HepG2 (cell line): ENCODE measurements at regions of chr1 and their contacts with region 1.

Region 1: DNA sequence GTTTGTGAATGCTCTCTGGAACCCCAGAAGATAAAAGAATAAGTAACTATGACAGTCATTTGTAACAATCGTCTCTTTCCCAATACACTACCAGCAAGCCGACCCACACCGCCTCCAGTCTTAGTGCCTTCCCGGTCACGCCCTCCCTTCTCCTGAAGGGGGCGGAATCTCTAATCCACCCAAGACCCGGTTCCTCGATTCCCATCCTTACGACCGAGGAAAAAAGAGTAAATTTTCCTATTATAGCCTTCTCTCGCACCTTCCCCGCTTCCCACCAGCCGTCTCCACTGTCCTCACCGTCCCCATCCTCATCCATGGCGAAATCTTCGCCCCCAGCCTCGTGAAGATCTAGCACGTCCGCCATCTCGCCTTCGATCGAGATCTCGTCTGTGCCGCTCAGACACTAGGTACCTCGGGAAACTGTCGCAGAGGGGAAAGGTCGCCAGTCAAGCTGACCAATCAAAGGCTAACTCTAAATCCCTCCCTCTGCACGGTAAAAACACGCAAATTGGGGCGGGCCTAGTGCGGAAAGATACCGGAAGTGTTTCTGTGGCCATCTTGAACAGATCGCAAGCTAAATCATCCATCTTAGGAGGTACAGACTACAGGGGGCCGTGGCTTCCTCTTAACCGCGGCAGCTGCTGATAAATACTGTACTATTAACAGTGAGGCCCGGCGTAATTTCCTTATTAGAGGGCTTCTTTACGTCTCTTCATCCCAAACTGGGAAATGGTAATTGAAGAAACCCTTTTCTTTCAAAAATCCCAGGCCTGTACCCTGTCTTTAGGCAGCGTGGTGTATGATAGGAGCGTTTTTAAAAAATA is at the start of gene RBM8A:
- DNase-seq: peak; percentile 97
- ATAC-seq: peak; percentile 99
- H3K4me3 ChIP-seq: peak within 1 kb of the TSS; percentile 77 to 95 (median 83)
- H3K27ac ChIP-seq: peak within 1 kb of the TSS; percentile 88
- H3K4me1 ChIP-seq: peaks cover 17% of the 10 kb centered on the region
- H3K27me3 ChIP-seq: no peaks in the 10 kb centered on the region; a peak in 1 of 5 replicates
- CTCF ChIP-seq: peak; percentile 73
- EP300 ChIP-seq: 0 out of 4 replicates have a peak, but pooled peaks of 1 of the 2 experiments have one; percentile 10
- POLR2A ChIP-seq: peak; percentile 90 to 93
- RAD21 ChIP-seq: no peak; the same call in 1 of the 2 replicates
- total RNA-seq, gene RBM8A: 162 and 224 TPM in 2 replicates

Region 2: GRCh38 chr1:145601593-145601992 is 325.7 kb before region 1 on chr1:
- CTCF ChIA-PET with region 1: no interaction called
- POLR2A ChIA-PET with region 1: no interaction called
- in situ Hi-C with region 1: no loop called
- intact Hi-C with region 1: no loop called
- DNase-seq: no peak
- ATAC-seq: no peak
- H3K4me3 ChIP-seq: no peak overlapping the region
- H3K27ac ChIP-seq: no peak overlapping the region
- H3K4me1 ChIP-seq: no peaks in the 10 kb centered on the region
- H3K27me3 ChIP-seq: no peaks in the 10 kb centered on the region
- CTCF ChIP-seq: no peak
- EP300 ChIP-seq: no peak
- POLR2A ChIP-seq: no peak
- RAD21 ChIP-seq: no peak

Region 3: GRCh38 chr1:145845514-145846161 is 81.6 kb before region 1 on chr1 and contains the start of gene NUDT17:
- CTCF ChIA-PET with region 1: no interaction called
- POLR2A ChIA-PET with region 1: interaction called, 13 read pairs
- in situ Hi-C with region 1: no loop called
- intact Hi-C with region 1: no loop called
- DNase-seq: peak; percentile 52
- ATAC-seq: peak; percentile 87
- H3K4me3 ChIP-seq: peak within 1 kb of the TSS; percentile 55 to 78 (median 66)
- H3K27ac ChIP-seq: no peak within 1 kb of the TSS
- H3K4me1 ChIP-seq: peaks cover 12% of the 10 kb centered on the region
- H3K27me3 ChIP-seq: no peaks in the 10 kb centered on the region
- CTCF ChIP-seq: peak; percentile 94
- EP300 ChIP-seq: no peak
- POLR2A ChIP-seq: no peak; a peak in 1 of 4 replicates
- RAD21 ChIP-seq: peak; percentile 78
- total RNA-seq, gene NUDT17: 2.6 TPM in 2 replicates

Region 4: GRCh38 chr1:145885738-145886287 is 41.5 kb before region 1 on chr1 and contains the start of gene ANKRD35:
- CTCF ChIA-PET with region 1: no interaction called
- POLR2A ChIA-PET with region 1: interaction called, 7 read pairs
- in situ Hi-C with region 1: loop called (anchors 5 kb)
- intact Hi-C with region 1: loop called (anchors 5 kb)
- DNase-seq: peak; percentile 63
- ATAC-seq: peak; percentile 99
- H3K4me3 ChIP-seq: peak within 1 kb of the TSS; percentile 63 to 80 (median 71)
- H3K27ac ChIP-seq: no peak within 1 kb of the TSS
- H3K4me1 ChIP-seq: peaks cover 43% of the 10 kb centered on the region
- H3K27me3 ChIP-seq: peaks cover 2 to 26% of the 10 kb centered on the region in 2 experiments
- CTCF ChIP-seq: no peak
- EP300 ChIP-seq: no peak
- POLR2A ChIP-seq: no peak
- RAD21 ChIP-seq: no peak
- total RNA-seq, gene ANKRD35: 0.02 TPM in 1 of 2 replicates, not detected in the other

Region 5: DNA sequence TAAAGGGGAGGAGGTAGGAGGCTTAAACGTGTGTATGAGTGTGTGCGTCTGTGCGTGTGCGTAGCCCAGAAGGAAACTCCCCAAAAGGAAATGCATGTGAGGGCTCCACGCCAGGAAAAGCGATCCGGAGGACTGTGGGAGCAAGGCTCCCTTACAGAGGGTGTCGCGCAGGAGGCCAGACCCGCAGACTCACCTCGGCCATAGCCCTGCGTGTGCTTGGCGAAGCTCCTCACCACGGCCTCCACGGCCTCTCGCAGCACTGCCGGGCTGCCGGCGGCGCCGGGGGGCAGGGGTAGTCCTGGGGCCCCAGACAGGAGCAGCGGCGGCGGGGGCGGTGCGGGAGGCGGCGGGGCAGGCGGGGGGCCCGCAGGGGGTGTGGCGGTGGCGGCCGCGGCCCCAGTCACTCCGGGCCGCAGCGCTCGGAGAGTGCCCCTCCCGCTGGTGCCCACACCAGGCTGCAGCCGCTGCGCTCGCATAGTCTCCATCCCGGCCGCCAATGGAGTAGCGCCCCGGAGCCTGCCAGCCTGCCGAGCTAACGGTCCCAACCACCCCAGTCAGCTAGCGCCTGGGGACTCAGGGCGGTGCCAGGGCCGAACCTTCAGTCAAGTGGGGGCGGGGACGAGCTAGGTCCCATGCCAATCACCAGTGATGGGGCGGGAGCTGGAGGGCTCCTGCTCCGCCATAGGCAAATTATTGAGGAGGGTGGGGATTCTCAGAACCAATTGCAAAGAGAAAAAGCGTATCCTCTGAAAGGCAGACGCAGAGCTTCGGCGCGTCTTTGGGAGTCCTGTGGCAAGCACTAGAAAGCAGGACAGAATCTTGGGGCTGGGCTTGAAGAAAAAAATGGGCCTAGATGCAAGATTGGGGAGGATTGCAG is 30.4 kb after region 1 on chr1 and contains the start of gene LIX1L:
- CTCF ChIA-PET with region 1: no interaction called
- POLR2A ChIA-PET with region 1: interaction called, 84 read pairs
- in situ Hi-C with region 1: loop called (anchors 5 kb)
- intact Hi-C with region 1: no loop called
- DNase-seq: peak; percentile 91
- ATAC-seq: peak; percentile 89
- H3K4me3 ChIP-seq: peak within 1 kb of the TSS; percentile 73 to 89 (median 80)
- H3K27ac ChIP-seq: peak within 1 kb of the TSS; percentile 61
- H3K4me1 ChIP-seq: peaks cover 72% of the 10 kb centered on the region
- H3K27me3 ChIP-seq: peaks cover 0 to 25% of the 10 kb centered on the region in 2 experiments; a peak in 3 of 5 replicates
- CTCF ChIP-seq: no peak
- EP300 ChIP-seq: no peak
- POLR2A ChIP-seq: peak; percentile 59 to 71
- RAD21 ChIP-seq: no peak
- total RNA-seq, gene LIX1L: 8.1 and 10.9 TPM in 2 replicates

Region 6: DNA sequence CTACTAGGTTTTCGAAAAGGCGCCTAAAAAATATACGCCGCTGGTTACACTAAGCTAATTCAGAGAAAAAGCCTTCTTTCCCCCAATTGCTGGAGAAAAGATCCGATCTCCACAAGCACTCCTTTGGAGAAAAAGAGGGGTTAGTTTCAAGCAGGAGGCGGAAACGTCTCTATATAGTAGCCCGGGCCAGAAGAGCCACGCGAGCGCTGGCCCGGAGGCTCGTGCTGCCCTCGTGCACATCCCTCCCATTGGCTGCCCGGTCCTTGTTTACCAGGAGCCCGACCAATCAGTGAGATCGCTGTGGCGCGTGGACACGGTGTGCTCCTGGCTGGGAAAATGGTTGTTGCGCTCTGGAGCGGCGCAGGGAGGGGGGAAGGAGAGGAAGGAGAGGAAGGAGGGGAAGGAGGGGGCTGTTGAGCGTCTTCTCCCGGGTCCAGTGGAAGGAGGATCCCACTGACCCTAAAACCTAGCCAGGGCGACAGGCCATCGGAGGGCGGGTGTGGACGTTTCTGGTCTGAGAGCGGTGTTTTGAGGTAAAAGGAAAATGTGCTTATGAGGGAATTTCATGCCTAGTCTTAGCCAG is 69.2 kb after region 1 on chr1 and contains the start of gene TXNIP:
- CTCF ChIA-PET with region 1: no interaction called
- POLR2A ChIA-PET with region 1: interaction called, 10 read pairs
- in situ Hi-C with region 1: no loop called
- intact Hi-C with region 1: no loop called
- DNase-seq: peak; percentile 94
- ATAC-seq: peak; percentile 99
- H3K4me3 ChIP-seq: peak within 1 kb of the TSS; percentile 68 to 98 (median 91)
- H3K27ac ChIP-seq: peak within 1 kb of the TSS; percentile 94
- H3K4me1 ChIP-seq: peaks cover 67% of the 10 kb centered on the region
- H3K27me3 ChIP-seq: no peaks in the 10 kb centered on the region; a peak in 1 of 5 replicates
- CTCF ChIP-seq: peak; percentile 14; the same call in 1 of the 2 replicates
- EP300 ChIP-seq: peak in 1 of 2 experiments; percentile 97; a peak in 3 of 4 replicates
- POLR2A ChIP-seq: peak; percentile 94 to 99
- RAD21 ChIP-seq: 0 out of 2 replicates have a peak, but pooled peaks have one; percentile 14
- total RNA-seq, gene TXNIP: 24.4 and 25.4 TPM in 2 replicates